ENCODE measurements at regions of chr15 and their contacts with region 1.

Region 1: DNA sequence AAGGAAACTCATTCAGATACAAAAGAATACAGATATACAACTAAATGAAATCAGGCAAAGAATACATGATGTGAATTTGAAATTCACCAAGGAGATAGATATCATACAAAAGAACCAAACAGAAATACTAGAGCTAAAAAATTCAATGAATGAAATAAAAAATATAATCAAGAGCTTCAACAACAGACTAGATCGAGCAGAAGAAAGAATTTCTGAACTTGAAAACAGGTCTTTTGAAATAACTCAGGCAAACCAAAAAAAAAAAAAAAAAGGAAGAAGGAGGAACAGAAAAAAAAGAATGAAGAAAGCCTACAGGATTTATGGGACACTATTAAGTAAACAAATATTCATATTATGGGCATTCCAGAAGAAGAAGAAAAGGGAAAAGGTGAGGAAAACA is 137.8 kb downstream of the DMXL2 start:
- DNase-seq: no peak
- CTCF ChIP-seq: no peak

Region 2: GRCh38 chr15:51185213-51186159 is 299.3 kb before region 1 on chr15:
- CTCF ChIA-PET with region 1: no interaction called
- POLR2A ChIA-PET with region 1: no interaction called
- DNase-seq: no peak
- CTCF ChIP-seq: no peak

Region 3: DNA sequence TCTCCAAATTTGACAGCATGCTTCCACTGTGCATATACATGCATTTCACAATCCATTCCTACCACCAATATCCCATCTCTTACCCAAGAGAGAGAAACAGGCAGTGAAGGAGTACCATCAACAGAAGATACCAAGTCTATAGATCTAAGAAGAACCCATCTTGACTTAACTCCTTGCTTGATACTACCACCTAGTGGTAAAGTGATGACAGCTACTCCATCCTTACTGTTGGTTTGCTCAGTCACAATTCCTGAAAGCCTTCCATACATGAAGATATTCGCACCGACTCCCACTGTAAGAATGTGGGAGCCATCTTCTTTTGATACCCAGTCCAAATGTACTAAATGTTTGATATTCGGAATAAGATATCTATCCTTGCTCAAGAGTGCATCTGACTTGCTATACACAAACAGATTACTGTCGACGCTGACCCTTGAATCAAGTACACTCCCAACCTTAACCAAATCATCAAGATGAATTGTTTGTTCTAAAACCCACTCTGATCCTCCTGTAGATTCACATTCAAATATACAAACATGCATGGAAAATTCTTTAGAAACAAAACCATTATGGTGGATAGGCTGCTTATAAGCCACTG is 14.7 kb after region 1 on chr15:
- CTCF ChIA-PET with region 1: interaction called, 16 read pairs
- POLR2A ChIA-PET with region 1: no interaction called
- DNase-seq: peak; percentile 52
- CTCF ChIP-seq: peak; percentile 61

Measured in GM10248 (cell line).